ENCODE measurements at regions of chr1 and their contacts with region 1.

Region 1: GRCh38 chr1:206803221-206803730 is 31.0 kb upstream of the IL10 start:
- DNase-seq: peak; percentile 87
- H3K4me3 Mint-ChIP-seq: peak overlapping the region; percentile 37
- H3K27ac Mint-ChIP-seq: peak overlapping the region; percentile 88
- H3K4me1 Mint-ChIP-seq: peaks cover 86% of the 10 kb centered on the region
- H3K27me3 Mint-ChIP-seq: peaks cover 22% of the 10 kb centered on the region

Region 2: GRCh38 chr1:206744683-206745082 is 58.6 kb before region 1 on chr1:
- CTCF ChIA-PET with region 1: interaction called, 33 read pairs
- POLR2A ChIA-PET with region 1: interaction called, 14 read pairs
- DNase-seq: peak; percentile 55
- H3K4me3 Mint-ChIP-seq: no peak overlapping the region
- H3K27ac Mint-ChIP-seq: no peak overlapping the region
- H3K4me1 Mint-ChIP-seq: peaks cover 71% of the 10 kb centered on the region
- H3K27me3 Mint-ChIP-seq: peaks cover 12% of the 10 kb centered on the region

Region 3: DNA sequence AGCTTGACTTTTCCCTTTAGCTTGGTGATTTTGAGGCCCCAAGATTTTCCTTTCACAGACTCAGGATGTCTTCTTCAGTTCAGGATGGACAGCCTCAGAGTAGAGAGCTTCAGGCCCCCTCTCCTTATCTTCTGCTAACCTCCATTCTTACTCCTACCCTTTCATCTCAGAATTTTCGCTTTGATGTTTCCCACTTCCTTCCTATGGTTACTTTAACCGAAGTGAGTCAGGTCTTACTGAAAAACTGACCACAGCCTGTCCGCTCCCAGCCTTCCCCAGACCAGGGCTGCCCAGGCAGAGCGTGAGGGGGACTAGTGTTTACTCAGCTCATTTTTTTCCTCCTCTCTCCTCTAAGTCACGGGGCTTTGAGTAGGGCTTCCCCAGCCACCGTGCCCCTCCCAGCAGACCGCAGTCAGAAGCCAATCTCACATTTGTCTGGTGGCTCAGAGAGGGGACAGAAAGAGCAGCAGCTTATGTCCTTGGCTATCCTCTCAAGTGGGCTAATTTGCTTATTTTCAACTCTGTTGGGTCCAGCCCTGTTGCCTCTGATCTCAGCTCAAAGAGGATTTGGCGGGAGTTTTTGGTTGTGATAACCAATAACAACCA is 36.9 kb before region 1 on chr1:
- CTCF ChIA-PET with region 1: interaction called, 39 read pairs
- POLR2A ChIA-PET with region 1: interaction called, 72 read pairs
- DNase-seq: peak; percentile 85
- H3K4me3 Mint-ChIP-seq: peak overlapping the region; percentile 21
- H3K27ac Mint-ChIP-seq: peak overlapping the region; percentile 66
- H3K4me1 Mint-ChIP-seq: peaks cover 75% of the 10 kb centered on the region
- H3K27me3 Mint-ChIP-seq: peaks cover 19% of the 10 kb centered on the region

Region 4: GRCh38 chr1:206784471-206784903 is 18.8 kb before region 1 on chr1:
- CTCF ChIA-PET with region 1: interaction called, 11 read pairs
- POLR2A ChIA-PET with region 1: interaction called, 34 read pairs
- DNase-seq: peak; percentile 94
- H3K4me3 Mint-ChIP-seq: peak overlapping the region; percentile 53
- H3K27ac Mint-ChIP-seq: peak overlapping the region; percentile 90
- H3K4me1 Mint-ChIP-seq: peaks cover 64% of the 10 kb centered on the region
- H3K27me3 Mint-ChIP-seq: peaks cover 22% of the 10 kb centered on the region

Region 5: GRCh38 chr1:206790502-206791250 is 12.6 kb before region 1 on chr1:
- CTCF ChIA-PET with region 1: interaction called, 11 read pairs
- POLR2A ChIA-PET with region 1: interaction called, 34 read pairs
- DNase-seq: no peak
- H3K4me3 Mint-ChIP-seq: no peak overlapping the region
- H3K27ac Mint-ChIP-seq: no peak overlapping the region
- H3K4me1 Mint-ChIP-seq: peaks cover 69% of the 10 kb centered on the region
- H3K27me3 Mint-ChIP-seq: peaks cover 45% of the 10 kb centered on the region

Region 6: DNA sequence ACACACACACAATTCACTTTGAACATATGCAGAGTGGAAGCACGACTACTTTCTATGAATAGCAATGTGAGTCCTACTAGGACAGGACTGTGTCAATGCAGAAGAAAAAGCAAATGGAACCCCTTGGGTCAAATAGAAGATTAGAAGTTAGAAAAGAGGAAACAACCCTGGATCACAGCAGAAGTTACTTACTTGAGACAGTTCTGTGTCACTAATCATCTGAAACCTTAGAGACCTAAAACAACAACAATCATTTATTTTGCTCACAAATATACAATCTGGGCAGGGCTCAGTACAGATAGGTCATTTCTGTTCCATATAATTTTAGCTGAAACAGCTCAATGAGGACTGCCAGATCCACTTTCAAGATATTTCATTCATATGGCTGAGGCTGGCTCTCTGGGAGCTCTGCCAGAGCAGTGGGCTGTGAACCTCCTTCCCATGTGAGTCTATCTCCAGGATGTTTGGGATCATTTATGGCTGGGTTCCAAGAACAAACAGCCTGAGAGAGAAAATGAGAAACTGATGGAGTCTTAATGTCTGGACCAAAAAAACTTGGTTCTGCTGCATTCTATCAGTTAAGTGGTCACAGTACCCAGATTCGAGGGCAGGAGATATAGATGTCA is 11.6 kb after region 1 on chr1:
- CTCF ChIA-PET with region 1: interaction called, 14 read pairs
- POLR2A ChIA-PET with region 1: interaction called, 21 read pairs
- DNase-seq: no peak
- H3K4me3 Mint-ChIP-seq: no peak overlapping the region
- H3K27ac Mint-ChIP-seq: no peak overlapping the region
- H3K4me1 Mint-ChIP-seq: peaks cover 40% of the 10 kb centered on the region
- H3K27me3 Mint-ChIP-seq: no peaks in the 10 kb centered on the region

Region 7: DNA sequence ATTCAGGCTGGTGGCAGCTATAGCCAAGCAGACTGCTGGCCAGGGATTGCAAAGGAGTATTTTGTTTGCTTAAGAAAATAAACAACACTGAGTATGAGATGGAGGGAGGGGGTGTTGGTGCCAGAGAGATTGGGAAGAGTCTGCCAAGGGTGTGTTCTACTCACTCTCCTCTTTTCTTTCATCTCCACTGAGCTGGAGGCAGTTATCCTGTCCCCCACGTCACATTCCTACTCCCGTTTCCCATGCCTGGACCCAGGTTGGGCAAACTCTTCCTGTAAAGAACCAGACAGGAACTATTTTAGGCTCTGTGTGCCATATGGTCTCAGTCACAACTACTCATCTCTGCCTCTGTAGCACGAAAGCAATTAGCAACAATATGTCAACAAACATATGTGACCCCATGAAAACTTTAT is 92.6 kb after region 1 on chr1:
- CTCF ChIA-PET with region 1: no interaction called
- POLR2A ChIA-PET with region 1: no interaction called
- DNase-seq: no peak
- H3K4me3 Mint-ChIP-seq: no peak overlapping the region
- H3K27ac Mint-ChIP-seq: no peak overlapping the region
- H3K4me1 Mint-ChIP-seq: peaks cover 22% of the 10 kb centered on the region
- H3K27me3 Mint-ChIP-seq: peaks cover 2% of the 10 kb centered on the region

Measured in activated CD4-positive, alpha-beta memory T cell treated with anti-CD3 and anti-CD28 coated beads, Interleukin-2, amount 10 ng/mL, durations not matched to agents 7 days and 5 days (primary cell).